GM18951 (cell line): ENCODE measurements at regions of chr18 and their contacts with region 1.

Region 1: DNA sequence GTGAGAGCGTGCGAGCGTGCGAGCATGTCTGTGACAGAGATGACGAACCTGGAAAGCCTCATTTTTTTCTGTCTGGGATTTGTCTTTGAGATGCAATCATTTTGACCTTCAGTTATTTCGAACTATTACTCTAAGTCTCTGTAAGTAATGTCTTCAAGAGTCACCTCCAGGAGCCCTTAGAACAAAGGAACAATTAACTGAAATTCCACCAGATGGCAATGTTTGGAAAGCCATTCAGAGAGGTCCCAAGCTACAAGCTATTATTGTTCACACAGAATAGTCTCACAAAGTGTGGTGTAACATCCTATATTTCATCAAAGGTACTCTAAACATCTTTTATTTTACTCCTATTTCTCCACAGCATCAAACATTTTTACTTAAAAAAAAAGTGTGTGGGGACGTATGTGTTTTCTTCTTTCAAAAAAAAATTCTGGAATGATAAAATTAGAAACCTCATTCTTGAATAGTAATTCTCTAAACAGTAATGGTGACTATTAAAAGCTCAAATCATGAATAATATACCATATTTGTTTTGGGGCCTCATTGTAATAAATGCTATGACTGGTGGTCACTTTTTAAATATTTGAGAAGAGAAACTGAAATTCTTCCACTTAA is 35.1 kb upstream of the MAPRE2 start:
- POLR2A ChIP-seq: no peak

Region 2: GRCh38 chr18:35143622-35144596 is 137.8 kb after region 1 on chr18:
- in situ Hi-C with region 1: loop called (anchors 10 kb)
- POLR2A ChIP-seq: no peak